Activated CD4-positive, alpha-beta T cell treated with anti-CD3 and anti-CD28 coated beads, Interleukin-2, amount 10 ng/mL, durations not matched to agents 24 days and 14 days (primary cell): ENCODE measurements at regions of chr17 and their contacts with region 1.

Region 1: GRCh38 chr17:16537130-16537458 is 31.9 kb downstream of the ZNF287 start:
- DNase-seq: no peak
- H3K4me3 Mint-ChIP-seq: peak overlapping the region; percentile 99
- H3K27ac Mint-ChIP-seq: no peak overlapping the region
- H3K4me1 Mint-ChIP-seq: peaks cover 14% of the 10 kb centered on the region
- H3K27me3 Mint-ChIP-seq: peaks cover 2% of the 10 kb centered on the region

Region 2: GRCh38 chr17:16380640-16381495 is 156.2 kb before region 1 on chr17 and contains the start of gene UBB:
- intact Hi-C with region 1: loop called (anchors 5 kb)
- DNase-seq: peak; percentile 98
- H3K4me3 Mint-ChIP-seq: peak within 1 kb of the TSS; percentile 90
- H3K27ac Mint-ChIP-seq: peak within 1 kb of the TSS; percentile 93
- H3K4me1 Mint-ChIP-seq: peaks cover 33% of the 10 kb centered on the region
- H3K27me3 Mint-ChIP-seq: no peaks in the 10 kb centered on the region
- total RNA-seq, gene UBB: 1,973 and 2,004 TPM in 2 replicates

Region 3: GRCh38 chr17:16568541-16569357 is 31.7 kb after region 1 on chr17 and contains the start of gene ZNF287:
- intact Hi-C with region 1: loop called (anchors 2 kb)
- DNase-seq: peak; percentile 97
- H3K4me3 Mint-ChIP-seq: peak within 1 kb of the TSS; percentile 84
- H3K27ac Mint-ChIP-seq: peak within 1 kb of the TSS; percentile 73
- H3K4me1 Mint-ChIP-seq: peaks cover 9% of the 10 kb centered on the region
- H3K27me3 Mint-ChIP-seq: peaks cover 5% of the 10 kb centered on the region
- total RNA-seq, gene ZNF287: 5.2 and 6.3 TPM in 2 replicates

Region 4: DNA sequence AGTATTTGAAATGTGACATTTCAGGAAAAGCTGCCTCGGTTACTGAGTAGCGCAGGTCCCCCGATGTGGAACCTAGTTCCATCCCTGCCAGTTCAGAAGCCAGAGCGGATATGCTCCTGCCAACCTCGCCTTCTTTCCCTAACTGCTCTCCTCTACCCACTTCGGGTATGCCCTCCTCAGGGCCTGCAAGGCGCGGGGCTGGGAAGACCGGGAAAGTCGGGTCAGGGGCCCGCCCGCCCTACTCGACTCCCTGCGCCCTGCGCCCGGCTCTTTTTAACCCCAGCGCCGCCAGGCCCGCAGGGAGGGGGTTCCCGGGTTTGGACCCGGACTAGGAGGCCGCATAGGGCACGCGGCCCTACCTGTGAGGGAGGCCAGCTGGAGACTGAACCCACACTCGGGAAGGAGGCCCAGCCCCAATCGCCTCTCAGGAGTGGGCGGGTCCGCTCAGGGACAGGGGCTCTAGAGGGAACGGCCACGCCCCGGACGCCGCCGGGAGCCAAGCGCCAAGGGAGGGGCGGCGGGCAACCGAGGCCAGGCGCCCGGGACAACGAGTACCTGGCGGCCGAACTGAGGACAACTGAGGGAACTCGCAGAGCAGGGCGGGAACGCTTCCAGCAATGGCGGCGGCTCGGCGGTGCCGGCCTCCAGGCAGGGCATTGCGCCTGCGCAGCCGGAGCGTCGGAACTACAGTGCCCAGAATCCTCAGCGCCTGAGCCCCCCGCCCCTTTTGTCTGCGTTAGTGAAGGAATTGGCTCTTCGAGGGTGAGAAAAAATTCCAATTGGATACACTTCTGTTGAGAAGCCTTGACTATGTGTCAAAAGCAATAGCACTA is 116.3 kb after region 1 on chr17 and contains the start of gene ZNF624:
- intact Hi-C with region 1: loop called (anchors 2 kb)
- DNase-seq: peak; percentile 96
- H3K4me3 Mint-ChIP-seq: peak within 1 kb of the TSS; percentile 89
- H3K27ac Mint-ChIP-seq: peak within 1 kb of the TSS; percentile 61
- H3K4me1 Mint-ChIP-seq: peaks cover 12% of the 10 kb centered on the region
- H3K27me3 Mint-ChIP-seq: peaks cover 9% of the 10 kb centered on the region
- total RNA-seq, gene ZNF624: 2.9 and 3.4 TPM in 2 replicates

Region 5: DNA sequence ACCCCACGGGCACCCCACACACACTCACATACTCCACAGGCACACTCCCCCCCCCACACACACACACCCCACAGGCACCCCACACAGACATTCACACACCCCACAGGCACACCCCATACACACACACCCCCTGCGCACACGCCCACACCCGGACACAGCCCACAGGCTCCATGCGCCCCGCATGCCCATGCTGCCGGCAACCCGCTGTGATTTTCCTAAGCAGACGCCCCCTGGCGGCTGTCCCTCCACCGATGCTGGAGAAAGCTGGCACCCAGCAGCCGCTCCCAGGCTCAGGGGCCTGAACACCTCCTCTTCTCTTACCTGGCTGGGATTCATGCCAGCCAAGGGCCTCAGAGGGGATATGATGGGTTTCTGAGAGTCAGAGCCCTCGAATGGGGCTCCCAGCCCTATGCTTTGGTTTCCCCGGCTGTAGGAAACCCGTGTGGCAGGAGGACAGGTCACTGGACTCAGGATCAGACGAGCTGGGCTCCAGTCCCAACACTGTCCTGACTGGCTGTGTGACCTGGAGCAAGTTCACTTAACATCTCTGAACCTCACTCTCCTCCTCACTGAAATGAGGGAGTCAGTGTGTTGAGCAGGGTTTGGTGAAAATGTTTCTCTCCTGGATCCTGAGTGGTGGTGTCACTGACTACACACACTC is 454.4 kb after region 1 on chr17:
- intact Hi-C with region 1: loop called (anchors 2 kb)
- DNase-seq: peak; percentile 94
- H3K4me3 Mint-ChIP-seq: no peak overlapping the region
- H3K27ac Mint-ChIP-seq: peak overlapping the region; percentile 59
- H3K4me1 Mint-ChIP-seq: peaks cover 34% of the 10 kb centered on the region
- H3K27me3 Mint-ChIP-seq: peaks cover 3% of the 10 kb centered on the region